ENCODE measurements at regions of chr3 and their contacts with region 1.

Region 1: GRCh38 chr3:45751537-45752242 is 44.6 kb downstream of the SLC6A20 start:
- DNase-seq: no peak
- ATAC-seq: no peak
- H3K4me3 ChIP-seq: no peak overlapping the region
- H3K27ac ChIP-seq: no peak overlapping the region
- H3K4me1 ChIP-seq: no peaks in the 10 kb centered on the region
- H3K27me3 ChIP-seq: no peaks in the 10 kb centered on the region
- CTCF ChIP-seq: no peak
- EP300 ChIP-seq: no peak
- POLR2A ChIP-seq: no peak
- RAD21 ChIP-seq: no peak

Region 2: DNA sequence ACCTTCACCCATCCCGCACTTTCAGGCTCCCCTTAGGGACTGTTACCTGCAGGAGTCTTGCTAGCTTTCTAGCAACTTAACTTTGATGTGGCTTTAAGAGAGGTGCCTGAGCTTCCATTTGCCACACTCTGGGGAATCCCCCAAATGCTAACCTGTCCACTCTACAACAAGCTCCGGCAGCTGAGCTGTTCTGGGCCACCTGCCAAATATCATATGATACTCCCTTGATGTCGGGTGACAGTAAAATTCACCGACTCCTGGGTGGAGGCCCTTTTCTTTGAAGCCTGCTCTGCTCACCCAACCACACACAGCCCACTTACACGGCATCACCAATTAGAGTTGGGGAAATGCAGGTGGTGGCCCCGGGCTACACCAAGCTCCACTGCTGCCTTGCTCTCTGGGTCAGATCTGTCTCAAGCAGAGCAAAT is 313.6 kb after region 1 on chr3:
- CTCF ChIA-PET with region 1: no interaction called
- POLR2A ChIA-PET with region 1: no interaction called
- RAD21 ChIA-PET with region 1: no interaction called
- SMC1A ChIA-PET with region 1: no interaction called
- in situ Hi-C with region 1: loop called (anchors 10 kb)
- intact Hi-C with region 1: no loop called
- DNase-seq: peak; percentile 56
- ATAC-seq: peak; percentile 96
- H3K4me3 ChIP-seq: no peak overlapping the region
- H3K27ac ChIP-seq: no peak overlapping the region
- H3K4me1 ChIP-seq: peaks cover 19% of the 10 kb centered on the region
- H3K27me3 ChIP-seq: no peaks in the 10 kb centered on the region
- CTCF ChIP-seq: no peak
- EP300 ChIP-seq: peak in 1 of 2 experiments; percentile 59; a peak in 2 of 4 replicates
- POLR2A ChIP-seq: no peak
- RAD21 ChIP-seq: peak; percentile 0; the same call in 1 of the 2 replicates